ENCODE measurements at regions of chr14 and their contacts with region 1.

Region 1: GRCh38 chr14:61569783-61570182 is 125.5 kb upstream of the HIF1A start:
- H3K4me3 Mint-ChIP-seq: peak overlapping the region; percentile 76
- H3K27ac Mint-ChIP-seq: peak overlapping the region; percentile 90
- H3K4me1 Mint-ChIP-seq: peaks cover 91% of the 10 kb centered on the region
- H3K27me3 Mint-ChIP-seq: no peaks in the 10 kb centered on the region

Region 2: GRCh38 chr14:61478971-61479473 is 90.8 kb before region 1 on chr14:
- intact Hi-C with region 1: no loop called
- H3K4me3 Mint-ChIP-seq: no peak overlapping the region
- H3K27ac Mint-ChIP-seq: peak overlapping the region; percentile 14
- H3K4me1 Mint-ChIP-seq: peaks cover 44% of the 10 kb centered on the region
- H3K27me3 Mint-ChIP-seq: no peaks in the 10 kb centered on the region

Region 3: DNA sequence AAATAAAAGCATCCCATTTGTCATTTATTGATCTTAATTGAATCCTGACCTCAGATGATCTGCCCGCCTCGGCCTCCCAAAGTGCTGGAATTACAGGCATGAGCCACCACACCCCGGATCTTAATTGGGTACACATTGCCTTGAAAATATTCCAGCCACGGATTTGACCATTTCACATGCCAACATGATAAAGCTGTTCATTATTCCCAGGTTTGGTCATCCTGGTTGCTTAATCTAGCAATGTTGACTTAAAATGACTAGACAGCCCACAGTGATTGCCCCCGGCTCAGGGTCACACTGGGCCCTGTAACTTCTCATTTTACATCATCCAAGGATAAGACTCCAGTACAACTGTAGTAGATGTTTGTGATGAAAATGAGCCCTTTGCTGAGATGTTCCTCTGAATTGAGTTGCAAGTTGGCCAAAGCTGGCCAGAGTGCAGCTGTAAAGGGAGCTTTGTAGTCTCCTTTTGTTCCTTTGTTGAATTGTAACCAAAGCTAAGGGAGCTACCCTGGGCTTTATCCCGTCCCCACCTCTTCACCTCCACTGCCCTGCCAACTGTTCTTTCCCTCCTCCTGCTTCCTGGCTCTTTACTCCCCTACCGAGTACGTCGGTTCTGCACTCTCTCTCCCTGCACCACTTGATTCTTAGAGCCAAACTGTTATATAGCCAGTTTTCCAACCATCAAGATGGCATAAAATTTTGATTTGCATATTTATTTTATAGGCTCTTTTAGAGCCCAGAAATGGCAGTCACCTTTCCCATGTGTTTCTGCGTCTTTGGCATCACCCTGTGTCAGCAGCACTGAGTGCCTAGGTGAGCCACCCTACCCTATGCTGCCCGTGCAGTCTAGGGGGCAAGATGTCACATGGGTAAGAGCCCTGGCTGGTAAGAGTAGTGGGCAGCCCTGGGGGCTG is 15.8 kb before region 1 on chr14:
- intact Hi-C with region 1: loop called (anchors 2 kb)
- H3K4me3 Mint-ChIP-seq: no peak overlapping the region
- H3K27ac Mint-ChIP-seq: peak overlapping the region; percentile 91
- H3K4me1 Mint-ChIP-seq: peaks cover 70% of the 10 kb centered on the region
- H3K27me3 Mint-ChIP-seq: no peaks in the 10 kb centered on the region